Dendritic cell treated with granulocyte-macrophage colony-stimulating factor and Interleukin-4, amounts not matched to agents 40 ng/mL and 50 ng/mL, for 4 days (primary cell): ENCODE measurements at regions of chr1 and their contacts with region 1.

Region 1: DNA sequence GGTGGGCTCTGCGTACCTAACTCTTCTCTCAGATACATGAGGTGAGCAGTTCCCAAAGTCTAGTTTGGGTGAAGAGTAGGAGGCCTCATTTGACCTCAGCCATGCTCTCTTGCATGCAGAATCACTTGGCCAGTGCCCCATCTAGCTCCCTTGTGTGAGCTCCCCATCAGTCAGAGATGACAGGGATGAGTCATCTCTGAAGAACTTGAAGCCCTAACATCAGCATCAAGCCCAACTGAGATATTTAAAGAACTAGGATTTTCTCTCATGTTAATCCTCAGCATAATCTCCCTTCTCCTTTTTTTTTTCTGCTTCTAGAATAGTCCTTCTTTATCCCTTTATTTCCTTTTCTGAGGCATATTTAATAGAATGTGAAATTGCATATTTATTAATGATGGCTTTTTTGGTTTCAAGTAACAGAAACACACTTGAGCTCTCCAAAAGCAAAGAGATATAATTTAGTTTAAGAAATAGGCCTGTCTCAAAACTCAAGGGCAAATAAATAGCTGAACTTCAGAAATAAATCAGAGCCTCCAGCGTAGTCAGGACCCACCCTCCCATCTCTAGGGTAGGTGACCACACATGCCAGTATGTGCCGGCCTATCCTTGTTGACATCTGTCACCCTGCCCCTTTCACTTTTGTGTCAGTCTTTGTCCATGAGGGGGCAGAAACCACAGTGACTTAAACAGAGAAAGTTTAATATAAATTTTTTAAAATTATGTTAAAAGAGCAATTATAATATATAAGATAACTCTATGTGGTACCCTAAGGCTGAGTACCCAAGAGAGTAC is 112.3 kb downstream of the TSEN15 start:
- H3K4me3 Mint-ChIP-seq: no peak overlapping the region
- H3K27ac Mint-ChIP-seq: peak overlapping the region; percentile 39
- H3K4me1 Mint-ChIP-seq: peaks cover 43% of the 10 kb centered on the region
- H3K27me3 Mint-ChIP-seq: no peaks in the 10 kb centered on the region

Region 2: GRCh38 chr1:184118046-184118445 is 45.8 kb before region 1 on chr1:
- intact Hi-C with region 1: no loop called
- H3K4me3 Mint-ChIP-seq: no peak overlapping the region
- H3K27ac Mint-ChIP-seq: no peak overlapping the region
- H3K4me1 Mint-ChIP-seq: no peaks in the 10 kb centered on the region
- H3K27me3 Mint-ChIP-seq: no peaks in the 10 kb centered on the region

Region 3: GRCh38 chr1:184212649-184213314 is 48.9 kb after region 1 on chr1:
- intact Hi-C with region 1: loop called (anchors 10 kb)
- H3K4me3 Mint-ChIP-seq: no peak overlapping the region
- H3K27ac Mint-ChIP-seq: peak overlapping the region; percentile 83
- H3K4me1 Mint-ChIP-seq: peaks cover 23% of the 10 kb centered on the region
- H3K27me3 Mint-ChIP-seq: no peaks in the 10 kb centered on the region

Region 4: DNA sequence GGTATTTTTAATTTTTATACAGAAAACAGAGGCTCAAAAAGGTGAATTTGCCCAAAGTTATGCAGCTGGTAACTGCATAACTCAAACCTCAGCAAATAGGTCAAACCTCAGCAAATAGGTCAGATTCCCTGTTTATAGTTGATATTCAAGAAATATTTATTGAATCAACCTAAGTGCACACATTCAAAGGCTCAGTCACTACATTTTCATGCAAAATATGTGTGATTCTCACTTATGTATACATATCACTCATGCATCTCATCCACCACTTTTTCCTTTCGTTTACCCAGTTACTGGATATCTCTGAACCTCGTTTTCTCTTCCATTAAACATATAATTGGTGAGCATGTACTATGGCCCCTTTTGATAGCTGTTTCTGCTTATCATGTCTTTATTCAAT is 64.7 kb after region 1 on chr1:
- intact Hi-C with region 1: no loop called
- H3K4me3 Mint-ChIP-seq: no peak overlapping the region
- H3K27ac Mint-ChIP-seq: no peak overlapping the region
- H3K4me1 Mint-ChIP-seq: no peaks in the 10 kb centered on the region
- H3K27me3 Mint-ChIP-seq: no peaks in the 10 kb centered on the region